Panc1 (cell line): ENCODE measurements at regions of chr7 and their contacts with region 1.

Region 1: GRCh38 chr7:99465421-99465768 is 572 bp downstream of the ATP5MF start:
- DNase-seq: no peak
- ATAC-seq: peak; percentile 5
- H3K4me3 ChIP-seq: peak overlapping the region; percentile 96 to 97
- H3K27ac ChIP-seq: peak overlapping the region; percentile 98
- H3K4me1 ChIP-seq: peaks cover 5% of the 10 kb centered on the region
- H3K27me3 ChIP-seq: no peaks in the 10 kb centered on the region
- CTCF ChIP-seq: no peak

Region 2: GRCh38 chr7:99440195-99440594 is 25.2 kb before region 1 on chr7:
- CTCF ChIA-PET with region 1: no interaction called
- POLR2A ChIA-PET with region 1: interaction called, 13 read pairs
- in situ Hi-C with region 1: no loop called
- intact Hi-C with region 1: no loop called
- DNase-seq: no peak
- ATAC-seq: no peak
- H3K4me3 ChIP-seq: peak overlapping the region; percentile 93 to 95
- H3K27ac ChIP-seq: peak overlapping the region; percentile 94
- H3K4me1 ChIP-seq: peaks cover 15% of the 10 kb centered on the region
- H3K27me3 ChIP-seq: no peaks in the 10 kb centered on the region
- CTCF ChIP-seq: no peak